Activated T-helper 2 cell treated with anti-CD3 and anti-CD28 coated beads, Interferon-gamma antibody, Interleukin-2, Interleukin-4, amounts not matched to agents 10 μg/mL and 5 μg/mL and 100 μg/mL, durations not matched to agents 14 hours and 24 hours and 36 hours (primary cell): ENCODE measurements at regions of chr4 and their contacts with region 1.

Region 1: GRCh38 chr4:67581208-67581857 is 22.8 kb downstream of the STAP1 start:
- DNase-seq: no peak
- H3K4me3 Mint-ChIP-seq: peak overlapping the region; percentile 62
- H3K27ac Mint-ChIP-seq: peak overlapping the region; percentile 87
- H3K4me1 Mint-ChIP-seq: peaks cover 31% of the 10 kb centered on the region
- H3K27me3 Mint-ChIP-seq: no peaks in the 10 kb centered on the region

Region 2: DNA sequence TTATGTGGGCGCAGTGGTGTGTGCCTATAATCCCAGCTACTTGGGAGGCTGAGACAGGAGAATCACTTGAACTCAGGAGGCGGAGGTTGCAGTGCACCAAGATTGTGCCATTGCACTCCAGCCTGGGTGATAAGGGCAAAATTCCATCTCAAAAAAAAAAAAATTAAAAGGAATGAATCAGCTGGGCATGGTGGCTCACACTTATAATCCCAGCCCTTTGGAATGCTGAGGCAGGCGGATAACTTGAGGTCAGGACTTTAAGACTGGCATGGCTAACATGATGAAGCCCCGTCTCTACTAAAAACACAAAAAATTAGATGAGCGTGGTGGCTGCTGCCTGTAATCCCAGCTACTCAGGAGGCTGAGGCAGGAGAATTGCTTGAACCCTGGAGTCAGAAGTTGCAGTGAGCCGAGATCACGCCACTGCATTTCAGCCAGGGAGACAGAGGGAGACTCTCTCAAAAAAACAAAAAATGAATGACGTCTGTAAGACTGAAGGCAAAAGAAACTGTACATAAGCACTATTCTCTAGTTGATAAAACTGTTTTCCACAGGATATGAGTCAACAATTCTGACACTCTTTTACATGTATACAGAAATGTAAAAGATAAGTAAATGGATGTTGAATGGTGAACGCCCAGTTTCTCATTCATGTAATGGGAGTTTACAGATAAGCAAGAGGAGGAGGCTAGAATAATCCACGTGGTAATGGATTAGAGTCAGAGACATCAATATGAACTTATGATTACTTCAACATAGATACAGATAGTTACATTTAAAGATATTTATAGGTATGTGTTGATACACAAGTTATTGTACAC is 58.3 kb before region 1 on chr4:
- intact Hi-C with region 1: loop called (anchors 1 kb)
- DNase-seq: no peak
- H3K4me3 Mint-ChIP-seq: peak overlapping the region; percentile 45
- H3K27ac Mint-ChIP-seq: peak overlapping the region; percentile 96
- H3K4me1 Mint-ChIP-seq: peaks cover 60% of the 10 kb centered on the region
- H3K27me3 Mint-ChIP-seq: no peaks in the 10 kb centered on the region

Region 3: GRCh38 chr4:67558493-67558892 is 22.8 kb before region 1 on chr4 and contains the start of gene STAP1:
- intact Hi-C with region 1: loop called (anchors 2 kb)
- DNase-seq: peak; percentile 52
- H3K4me3 Mint-ChIP-seq: peak within 1 kb of the TSS; percentile 93
- H3K27ac Mint-ChIP-seq: peak within 1 kb of the TSS; percentile 95
- H3K4me1 Mint-ChIP-seq: peaks cover 53% of the 10 kb centered on the region
- H3K27me3 Mint-ChIP-seq: no peaks in the 10 kb centered on the region
- total RNA-seq, gene STAP1: 18.8 and 18.9 TPM in 2 replicates

Region 4: DNA sequence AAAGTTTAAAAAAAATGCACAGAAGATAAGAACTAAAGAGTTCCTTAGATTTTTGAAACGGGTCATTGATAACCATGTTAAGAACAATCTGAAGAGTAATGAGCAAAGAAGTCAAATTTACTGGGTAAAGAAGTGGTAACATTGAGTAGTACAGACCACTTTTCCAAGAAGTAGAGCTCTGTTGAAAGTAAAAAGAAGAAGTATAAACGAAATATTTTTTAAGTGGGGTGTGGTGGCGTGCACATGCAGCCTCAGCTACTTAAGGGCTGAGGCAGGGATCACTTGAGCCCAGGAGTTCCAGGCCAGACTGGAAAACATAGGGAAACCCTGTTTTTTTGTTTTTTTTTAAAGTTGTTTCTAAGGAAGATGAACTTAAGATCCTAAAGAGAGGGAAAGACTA is 51.2 kb after region 1 on chr4:
- intact Hi-C with region 1: loop called (anchors 5 kb)
- DNase-seq: no peak
- H3K4me3 Mint-ChIP-seq: peak overlapping the region; percentile 87
- H3K27ac Mint-ChIP-seq: peak overlapping the region; percentile 88
- H3K4me1 Mint-ChIP-seq: peaks cover 22% of the 10 kb centered on the region
- H3K27me3 Mint-ChIP-seq: no peaks in the 10 kb centered on the region

Region 5: GRCh38 chr4:67684839-67685531 is 103.7 kb after region 1 on chr4:
- intact Hi-C with region 1: loop called (anchors 1 kb)
- DNase-seq: no peak
- H3K4me3 Mint-ChIP-seq: no peak overlapping the region
- H3K27ac Mint-ChIP-seq: peak overlapping the region; percentile 23
- H3K4me1 Mint-ChIP-seq: peaks cover 44% of the 10 kb centered on the region
- H3K27me3 Mint-ChIP-seq: no peaks in the 10 kb centered on the region